ENCODE measurements at regions of chr1 and their contacts with region 1.

Region 1: DNA sequence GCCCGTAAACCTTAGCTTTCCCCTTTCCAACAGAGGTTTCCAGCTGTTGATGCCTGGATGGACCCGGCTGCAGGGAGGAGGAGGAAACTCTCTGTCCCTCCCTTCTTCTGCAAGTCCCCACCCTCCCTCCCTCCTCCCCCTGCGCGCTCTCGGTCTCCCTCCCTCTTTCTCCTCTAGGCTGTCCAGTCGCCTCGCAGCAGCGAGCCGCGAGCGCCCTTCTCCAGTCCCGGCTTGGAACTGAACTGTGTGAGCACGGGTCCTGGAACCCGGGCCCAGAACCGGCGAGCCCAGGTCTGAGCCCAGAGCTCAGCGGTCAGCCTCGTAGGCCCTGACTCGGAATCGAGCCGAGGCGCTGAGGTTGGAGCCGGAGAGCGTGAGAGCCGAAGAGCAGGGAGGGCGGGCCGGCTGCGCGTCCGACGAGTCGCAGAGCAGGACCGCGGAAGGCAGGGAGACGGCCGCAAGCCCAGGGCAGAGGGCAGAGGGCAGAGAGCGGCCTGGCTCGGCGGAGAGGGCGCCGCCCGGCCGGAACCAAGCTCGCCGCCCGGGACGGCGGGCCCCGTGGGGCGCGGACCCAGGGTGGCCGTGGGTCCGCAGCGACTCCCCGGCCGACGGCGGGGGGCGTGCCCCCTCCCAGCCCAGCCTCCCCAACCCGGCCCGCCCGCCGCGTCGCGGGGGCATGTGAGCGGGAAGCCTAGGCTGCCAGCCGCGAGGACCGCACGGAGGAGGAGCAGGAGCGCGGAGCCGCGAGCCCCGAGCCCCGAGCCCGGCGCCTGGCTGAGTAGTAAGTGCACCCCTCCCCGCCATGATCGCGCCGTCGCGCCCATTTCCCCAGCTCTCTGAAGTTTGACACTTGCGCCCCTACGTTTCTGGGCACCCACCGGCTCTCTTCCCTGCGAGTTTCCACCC is at the start of gene SOX13:
- DNase-seq: peak; percentile 89
- H3K4me3 ChIP-seq: peak within 1 kb of the TSS; percentile 74 to 99 (median 86)
- H3K27ac ChIP-seq: peak within 1 kb of the TSS; percentile 49
- H3K4me1 ChIP-seq: peaks cover 12% of the 10 kb centered on the region
- H3K27me3 ChIP-seq: no peaks in the 10 kb centered on the region
- CTCF ChIP-seq: peak in 1 of 2 donors; percentile 49
- total RNA-seq, gene SOX13: 7.8 to 22.0 TPM

Region 2: DNA sequence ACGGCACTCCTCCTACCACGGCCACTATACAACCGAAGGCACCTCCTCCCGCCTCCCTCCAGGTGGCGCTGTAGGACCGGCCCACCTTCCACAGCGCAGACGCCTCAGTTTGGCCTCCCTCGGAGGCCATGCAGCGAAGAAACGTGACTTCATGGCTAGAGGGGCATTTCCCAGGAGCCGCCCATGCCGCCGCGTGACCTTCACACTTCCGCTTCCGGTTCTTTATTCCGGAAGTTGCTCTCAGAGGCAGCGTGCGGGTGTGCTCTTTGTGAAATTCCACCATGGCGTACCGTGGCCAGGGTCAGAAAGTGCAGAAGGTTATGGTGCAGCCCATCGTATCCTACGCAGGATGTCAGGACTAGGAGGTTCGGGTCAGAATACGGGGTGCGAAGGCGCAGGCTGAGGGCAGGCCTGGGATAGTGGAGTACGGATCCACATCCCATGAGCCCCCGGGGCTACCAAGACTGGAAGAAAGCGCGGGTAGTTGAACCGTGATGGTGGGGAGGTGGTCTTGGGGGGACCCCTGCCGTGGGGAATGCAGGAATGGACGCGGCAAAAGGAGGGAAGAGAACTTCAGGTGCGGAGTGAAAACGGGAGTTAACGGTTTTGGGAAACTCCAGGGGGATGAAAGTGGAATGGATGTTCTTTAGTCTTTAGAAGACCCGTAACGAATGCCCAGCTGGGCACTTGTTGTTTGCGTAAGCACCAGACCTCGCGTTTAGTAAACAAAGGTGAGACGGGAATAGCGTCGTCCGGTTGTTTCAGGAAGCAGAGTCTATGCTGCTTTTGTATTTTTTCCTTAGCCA is 211.6 kb before region 1 on chr1 and contains the start of gene SNRPE:
- CTCF ChIA-PET with region 1: interaction called, 3 read pairs
- dilution Hi-C with region 1: no loop called
- in situ Hi-C with region 1: no loop called
- intact Hi-C with region 1: loop called (anchors 1 kb)
- DNase-seq: peak; percentile 97
- H3K4me3 ChIP-seq: peak within 1 kb of the TSS; percentile 59 to 92 (median 74)
- H3K27ac ChIP-seq: peak within 1 kb of the TSS; percentile 82
- H3K4me1 ChIP-seq: peaks cover 22% of the 10 kb centered on the region
- H3K27me3 ChIP-seq: no peaks in the 10 kb centered on the region
- CTCF ChIP-seq: peak; percentile 80 to 94
- total RNA-seq, gene SNRPE: 21.7 to 131 TPM

Region 3: GRCh38 chr1:203871107-203871875 is 201.9 kb before region 1 on chr1:
- CTCF ChIA-PET with region 1: interaction called, 10 read pairs
- dilution Hi-C with region 1: no loop called
- in situ Hi-C with region 1: no loop called
- intact Hi-C with region 1: loop called (anchors 1 kb)
- DNase-seq: peak; percentile 38
- H3K4me3 ChIP-seq: no peak overlapping the region
- H3K27ac ChIP-seq: no peak overlapping the region
- H3K4me1 ChIP-seq: no peaks in the 10 kb centered on the region
- H3K27me3 ChIP-seq: no peaks in the 10 kb centered on the region
- CTCF ChIP-seq: peak; percentile 89 to 98

Region 4: GRCh38 chr1:203880606-203881005 is 192.6 kb before region 1 on chr1:
- CTCF ChIA-PET with region 1: interaction called, 10 read pairs
- dilution Hi-C with region 1: no loop called
- in situ Hi-C with region 1: no loop called
- intact Hi-C with region 1: loop called (anchors 5 kb)
- DNase-seq: no peak
- H3K4me3 ChIP-seq: no peak overlapping the region
- H3K27ac ChIP-seq: no peak overlapping the region
- H3K4me1 ChIP-seq: no peaks in the 10 kb centered on the region
- H3K27me3 ChIP-seq: no peaks in the 10 kb centered on the region
- CTCF ChIP-seq: no peak

Region 5: GRCh38 chr1:203888807-203889251 is 184.4 kb before region 1 on chr1:
- CTCF ChIA-PET with region 1: no interaction called
- dilution Hi-C with region 1: no loop called
- in situ Hi-C with region 1: no loop called
- intact Hi-C with region 1: loop called (anchors 5 kb)
- DNase-seq: peak; percentile 58
- H3K4me3 ChIP-seq: no peak overlapping the region
- H3K27ac ChIP-seq: peak overlapping the region; percentile 95
- H3K4me1 ChIP-seq: peaks cover 18% of the 10 kb centered on the region
- H3K27me3 ChIP-seq: no peaks in the 10 kb centered on the region
- CTCF ChIP-seq: no peak

Region 6: GRCh38 chr1:203968728-203969127 is 104.5 kb before region 1 on chr1:
- CTCF ChIA-PET with region 1: interaction called, 24 read pairs
- dilution Hi-C with region 1: no loop called
- in situ Hi-C with region 1: no loop called
- intact Hi-C with region 1: no loop called
- DNase-seq: no peak
- H3K4me3 ChIP-seq: no peak overlapping the region
- H3K27ac ChIP-seq: no peak overlapping the region
- H3K4me1 ChIP-seq: no peaks in the 10 kb centered on the region
- H3K27me3 ChIP-seq: no peaks in the 10 kb centered on the region
- CTCF ChIP-seq: no peak

Region 7: DNA sequence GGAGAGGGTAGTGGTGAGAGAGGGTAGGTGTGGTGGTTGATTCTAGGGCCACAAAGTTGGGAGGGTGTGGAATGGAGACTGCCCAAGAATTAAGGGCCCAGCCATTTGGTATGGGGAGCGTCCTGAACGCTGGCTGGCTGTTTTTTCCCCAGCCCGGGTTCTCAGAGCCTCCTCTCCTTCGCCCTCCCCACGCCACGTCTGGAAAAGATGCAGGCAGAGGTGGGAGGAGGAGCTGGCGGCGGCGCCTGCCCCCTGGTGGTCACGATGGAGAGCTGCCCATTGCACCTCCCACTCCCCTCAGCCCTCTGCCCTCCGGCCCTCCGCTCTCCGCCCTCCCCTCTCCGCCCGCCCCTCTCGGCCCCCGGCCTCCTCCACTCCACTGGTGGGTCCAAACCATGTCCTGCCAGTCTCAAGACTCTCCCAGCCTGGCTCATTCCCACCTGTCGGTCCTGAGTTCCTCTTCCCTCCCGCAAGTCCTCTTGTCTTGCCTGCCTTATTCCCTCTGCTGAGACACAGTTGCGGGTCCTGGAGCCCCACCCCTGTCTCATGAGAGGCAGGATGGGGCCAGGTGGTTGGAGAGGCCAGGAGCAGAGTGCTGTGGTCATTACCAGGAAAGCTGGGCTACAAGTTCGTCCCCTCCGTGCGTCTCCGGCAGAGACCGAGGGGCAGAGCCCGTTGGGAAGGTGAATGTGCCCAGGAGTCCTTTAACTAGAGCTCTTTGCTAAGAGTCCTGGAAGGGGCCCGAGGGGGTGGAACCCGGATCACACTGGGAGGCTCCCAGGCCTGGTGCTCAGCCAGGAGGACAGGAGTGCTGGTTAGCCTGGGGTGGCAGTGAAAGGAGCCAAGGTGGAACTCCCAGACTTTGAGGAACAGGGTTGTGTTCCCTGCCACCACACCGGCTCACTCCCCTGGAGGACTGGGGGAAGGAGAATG is 56.0 kb after region 1 on chr1:
- CTCF ChIA-PET with region 1: interaction called, 4 read pairs
- dilution Hi-C with region 1: no loop called
- in situ Hi-C with region 1: no loop called
- intact Hi-C with region 1: loop called (anchors 1 kb)
- DNase-seq: peak; percentile 31
- H3K4me3 ChIP-seq: peak overlapping the region; percentile 18 to 45 (median 31)
- H3K27ac ChIP-seq: no peak overlapping the region
- H3K4me1 ChIP-seq: peaks cover 35% of the 10 kb centered on the region
- H3K27me3 ChIP-seq: no peaks in the 10 kb centered on the region
- CTCF ChIP-seq: peak; percentile 66 to 87